Caco-2 (cell line): ENCODE measurements at regions of chr16 and their contacts with region 1.

Region 1: DNA sequence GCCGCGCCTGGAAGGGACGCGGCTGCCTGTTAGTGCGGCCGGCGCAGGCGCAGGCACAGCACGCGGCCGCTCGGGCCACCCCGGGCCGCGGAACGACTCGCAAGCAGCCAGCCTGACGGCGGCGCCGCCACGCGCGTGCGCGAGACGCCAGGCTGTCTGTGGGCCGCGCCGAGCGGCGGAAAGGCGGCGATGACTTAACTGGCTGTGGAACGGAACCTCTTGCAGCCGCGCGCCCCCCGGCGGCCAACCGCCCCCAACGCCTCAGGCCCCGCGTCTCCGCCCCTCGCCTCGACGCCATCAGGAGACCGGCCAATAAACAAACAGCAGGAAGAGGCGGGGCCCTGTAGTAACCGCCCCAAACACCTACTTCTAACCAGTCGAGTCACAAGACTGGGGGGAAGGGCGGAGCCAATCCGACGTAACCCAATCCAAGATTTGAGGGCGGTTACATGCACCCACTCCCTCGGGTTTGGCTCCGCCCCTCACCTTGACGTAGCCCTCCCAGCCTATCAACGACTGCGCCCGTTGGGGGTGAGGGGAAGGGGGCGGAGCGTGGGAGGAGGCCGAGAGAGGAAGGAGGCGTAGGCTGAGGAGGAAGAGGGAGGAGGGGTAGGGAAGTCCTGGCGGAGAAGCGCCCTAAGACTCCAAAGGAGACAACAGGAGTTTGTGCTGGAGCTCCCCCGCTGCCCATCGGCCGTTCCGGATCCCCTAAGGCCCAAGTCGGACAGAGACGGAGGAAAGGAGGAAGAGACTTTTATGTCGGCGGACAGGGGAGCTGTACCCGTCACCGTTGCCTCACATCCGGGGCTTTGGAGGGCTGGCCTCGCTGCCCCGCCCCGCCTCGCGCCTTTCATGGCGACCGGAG is at the start of gene FBRS:
- DNase-seq: peak; percentile 99 to 100
- H3K4me3 ChIP-seq: peak within 1 kb of the TSS; percentile 50
- H3K4me3 Mint-ChIP-seq: peak within 1 kb of the TSS; percentile 90
- H3K27ac Mint-ChIP-seq: peak within 1 kb of the TSS; percentile 96
- H3K4me1 ChIP-seq: no peaks in the 10 kb centered on the region; the same call in 1 of the 2 replicates
- H3K4me1 Mint-ChIP-seq: peaks cover 10% of the 10 kb centered on the region
- H3K27me3 ChIP-seq: no peaks in the 10 kb centered on the region
- H3K27me3 Mint-ChIP-seq: no peaks in the 10 kb centered on the region
- CTCF ChIP-seq: peak; percentile 54 to 71
- total RNA-seq, gene FBRS: 46.1 and 47.9 TPM in 2 replicates

Region 2: GRCh38 chr16:30526823-30527635 is 131.1 kb before region 1 on chr16:
- CTCF ChIA-PET with region 1: no interaction called
- POLR2A ChIA-PET with region 1: no interaction called
- intact Hi-C with region 1: loop called (anchors 10 kb)
- DNase-seq: peak; percentile 97 to 98
- H3K4me3 ChIP-seq: peak overlapping the region; percentile 69
- H3K4me3 Mint-ChIP-seq: peak overlapping the region; percentile 82
- H3K27ac Mint-ChIP-seq: peak overlapping the region; percentile 75
- H3K4me1 ChIP-seq: peaks cover 25% of the 10 kb centered on the region
- H3K4me1 Mint-ChIP-seq: peaks cover 12% of the 10 kb centered on the region
- H3K27me3 ChIP-seq: no peaks in the 10 kb centered on the region
- H3K27me3 Mint-ChIP-seq: no peaks in the 10 kb centered on the region
- CTCF ChIP-seq: peak; percentile 36 to 43

Region 3: DNA sequence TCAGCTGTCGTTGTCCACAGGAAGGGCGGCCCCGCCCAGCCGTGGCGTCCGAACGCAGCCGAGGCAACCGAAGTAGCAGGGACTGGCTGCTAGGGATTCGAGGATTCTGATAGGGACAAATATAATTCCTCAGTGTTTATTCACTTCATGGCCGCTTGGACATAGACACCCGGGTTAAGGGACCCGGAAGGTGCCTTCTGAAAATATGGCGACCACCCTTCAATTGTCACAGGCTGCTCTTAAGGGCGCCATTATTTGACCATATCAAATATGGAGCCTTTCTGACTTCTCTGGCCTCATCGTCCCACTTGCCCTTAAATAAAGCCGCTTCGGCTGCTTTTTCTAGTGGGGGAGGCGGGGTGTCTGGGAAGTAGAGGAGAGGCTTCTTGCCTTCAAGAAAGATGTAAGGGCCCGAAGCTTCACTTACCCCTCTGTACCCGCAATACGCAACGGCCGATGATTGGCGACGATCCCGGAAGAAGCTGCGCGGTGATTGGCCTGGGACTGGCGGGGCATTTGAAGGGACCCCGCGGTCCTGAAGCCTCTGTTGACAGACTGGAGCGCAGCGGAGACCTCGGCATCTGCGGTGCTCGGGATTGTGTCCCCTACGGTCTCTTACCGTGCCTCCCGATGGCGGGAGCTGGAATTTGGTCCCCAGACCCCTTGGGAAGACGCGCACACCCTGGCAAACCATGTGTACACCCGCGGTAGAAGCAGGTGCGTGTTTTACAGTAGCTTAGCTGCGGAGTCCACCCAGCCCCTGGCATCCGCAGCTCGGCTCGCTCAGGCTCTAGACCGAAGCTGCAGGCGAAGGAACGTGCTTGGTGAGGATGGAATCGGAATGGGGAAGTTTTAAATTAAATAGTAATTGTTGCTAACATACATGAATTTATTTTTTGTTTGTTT is 86.2 kb before region 1 on chr16 and contains the start of gene ZNF688:
- CTCF ChIA-PET with region 1: interaction called, 3 read pairs
- POLR2A ChIA-PET with region 1: interaction called, 4 read pairs
- intact Hi-C with region 1: loop called (anchors 1 kb)
- DNase-seq: peak; percentile 94 to 97
- H3K4me3 ChIP-seq: peak within 1 kb of the TSS; percentile 77
- H3K4me3 Mint-ChIP-seq: peak within 1 kb of the TSS; percentile 82
- H3K27ac Mint-ChIP-seq: peak within 1 kb of the TSS; percentile 93
- H3K4me1 ChIP-seq: no peaks in the 10 kb centered on the region
- H3K4me1 Mint-ChIP-seq: peaks cover 7% of the 10 kb centered on the region
- H3K27me3 ChIP-seq: no peaks in the 10 kb centered on the region
- H3K27me3 Mint-ChIP-seq: no peaks in the 10 kb centered on the region
- CTCF ChIP-seq: no peak
- total RNA-seq, gene ZNF688: 6.2 and 10.0 TPM in 2 replicates

Region 4: GRCh38 chr16:30628627-30629540 is 29.2 kb before region 1 on chr16:
- CTCF ChIA-PET with region 1: interaction called, 4 read pairs
- POLR2A ChIA-PET with region 1: interaction called, 9 read pairs
- intact Hi-C with region 1: loop called (anchors 1 kb)
- DNase-seq: peak; percentile 81 to 87
- H3K4me3 ChIP-seq: no peak overlapping the region
- H3K4me3 Mint-ChIP-seq: no peak overlapping the region
- H3K27ac Mint-ChIP-seq: no peak overlapping the region
- H3K4me1 ChIP-seq: no peaks in the 10 kb centered on the region
- H3K4me1 Mint-ChIP-seq: no peaks in the 10 kb centered on the region
- H3K27me3 ChIP-seq: no peaks in the 10 kb centered on the region
- H3K27me3 Mint-ChIP-seq: no peaks in the 10 kb centered on the region
- CTCF ChIP-seq: peak; percentile 76 to 90

Region 5: GRCh38 chr16:30698139-30698815 is 40.2 kb after region 1 on chr16:
- CTCF ChIA-PET with region 1: interaction called, 9 read pairs
- POLR2A ChIA-PET with region 1: interaction called, 3 read pairs
- intact Hi-C with region 1: loop called (anchors 1 kb)
- DNase-seq: peak; percentile 98
- H3K4me3 ChIP-seq: peak overlapping the region; percentile 99
- H3K4me3 Mint-ChIP-seq: peak overlapping the region; percentile 95
- H3K27ac Mint-ChIP-seq: peak overlapping the region; percentile 98
- H3K4me1 ChIP-seq: peaks cover 7% of the 10 kb centered on the region; the same call in 1 of the 2 replicates
- H3K4me1 Mint-ChIP-seq: no peaks in the 10 kb centered on the region
- H3K27me3 ChIP-seq: no peaks in the 10 kb centered on the region
- H3K27me3 Mint-ChIP-seq: no peaks in the 10 kb centered on the region
- CTCF ChIP-seq: no peak

Region 6: GRCh38 chr16:30747799-30748634 is 89.9 kb after region 1 on chr16 and contains the start of gene PHKG2:
- CTCF ChIA-PET with region 1: no interaction called
- POLR2A ChIA-PET with region 1: interaction called, 4 read pairs
- intact Hi-C with region 1: loop called (anchors 10 kb)
- DNase-seq: peak; percentile 98
- H3K4me3 ChIP-seq: peak within 1 kb of the TSS; percentile 96
- H3K4me3 Mint-ChIP-seq: peak within 1 kb of the TSS; percentile 68
- H3K27ac Mint-ChIP-seq: peak within 1 kb of the TSS; percentile 64
- H3K4me1 ChIP-seq: peaks cover 11% of the 10 kb centered on the region
- H3K4me1 Mint-ChIP-seq: peaks cover 20% of the 10 kb centered on the region
- H3K27me3 ChIP-seq: no peaks in the 10 kb centered on the region
- H3K27me3 Mint-ChIP-seq: no peaks in the 10 kb centered on the region
- CTCF ChIP-seq: no peak
- total RNA-seq, gene PHKG2: 40.8 and 48.6 TPM in 2 replicates

Region 7: DNA sequence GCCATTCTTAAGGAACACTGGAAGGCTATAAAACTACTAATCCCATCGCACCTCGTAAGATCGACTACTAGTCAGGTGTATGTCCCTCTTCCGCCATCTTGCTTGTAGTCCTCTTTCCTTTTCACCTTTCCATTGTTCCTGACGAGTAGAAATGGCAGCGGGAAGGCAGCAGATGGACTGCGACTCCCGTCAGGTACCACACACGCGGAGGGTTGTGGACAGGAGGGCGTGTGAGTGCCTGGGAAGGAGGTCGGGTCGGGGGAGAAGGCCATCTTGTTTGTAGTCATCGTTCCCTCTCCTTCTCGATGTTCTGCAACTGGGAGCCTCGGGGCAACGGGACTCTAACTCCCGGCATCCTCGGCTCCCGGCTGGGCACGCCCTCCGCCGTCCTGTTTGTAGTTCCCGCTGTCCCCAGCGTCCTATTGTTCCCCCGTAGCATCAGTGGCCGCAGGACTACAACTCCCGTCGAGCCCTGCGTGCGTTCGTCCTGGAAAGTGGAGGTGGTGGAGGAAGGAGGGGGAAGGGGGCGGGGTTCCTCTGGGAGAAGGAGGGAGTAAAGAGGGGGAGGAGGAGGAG is 264.9 kb after region 1 on chr16:
- CTCF ChIA-PET with region 1: no interaction called
- POLR2A ChIA-PET with region 1: no interaction called
- intact Hi-C with region 1: loop called (anchors 10 kb)
- DNase-seq: peak; percentile 97 to 99
- H3K4me3 ChIP-seq: peak overlapping the region; percentile 49
- H3K4me3 Mint-ChIP-seq: peak overlapping the region; percentile 100
- H3K27ac Mint-ChIP-seq: peak overlapping the region; percentile 100
- H3K4me1 ChIP-seq: no peaks in the 10 kb centered on the region
- H3K4me1 Mint-ChIP-seq: no peaks in the 10 kb centered on the region
- H3K27me3 ChIP-seq: no peaks in the 10 kb centered on the region
- H3K27me3 Mint-ChIP-seq: no peaks in the 10 kb centered on the region
- CTCF ChIP-seq: no peak